CD8-positive, alpha-beta memory T cell (primary cell): ENCODE measurements at regions of chr17 and their contacts with region 1.

Region 1: GRCh38 chr17:59791603-59792457 is 84.4 kb downstream of the VMP1 start:
- DNase-seq: no peak
- H3K4me3 ChIP-seq: no peak overlapping the region
- H3K4me3 Mint-ChIP-seq: no peak overlapping the region
- H3K27ac ChIP-seq: no peak overlapping the region
- H3K27ac Mint-ChIP-seq: peak overlapping the region in 3 of 8 donors; percentile 23 to 45 (median 33)
- H3K4me1 ChIP-seq: peaks cover 15% of the 10 kb centered on the region
- H3K4me1 Mint-ChIP-seq: peaks cover 8 to 23% (median 18%) of the 10 kb centered on the region in 3 donors
- H3K27me3 ChIP-seq: no peaks in the 10 kb centered on the region
- H3K27me3 Mint-ChIP-seq: no peaks in the 10 kb centered on the region

Region 2: GRCh38 chr17:59846394-59847165 is 54.8 kb after region 1 on chr17:
- CTCF ChIA-PET with region 1: interaction called, 3 read pairs
- POLR2A ChIA-PET with region 1: interaction called, 11 read pairs
- DNase-seq: no peak
- H3K4me3 ChIP-seq: no peak overlapping the region
- H3K4me3 Mint-ChIP-seq: peak overlapping the region in 3 of 7 donors; percentile 16 to 73 (median 46)
- H3K27ac ChIP-seq: no peak overlapping the region
- H3K27ac Mint-ChIP-seq: peak overlapping the region in 6 of 8 donors; percentile 10 to 85 (median 57)
- H3K4me1 ChIP-seq: peaks cover 50% of the 10 kb centered on the region
- H3K4me1 Mint-ChIP-seq: peaks cover 44 to 69% (median 64%) of the 10 kb centered on the region in 3 donors
- H3K27me3 ChIP-seq: no peaks in the 10 kb centered on the region
- H3K27me3 Mint-ChIP-seq: peaks cover 0 to 1% of the 10 kb centered on the region in 2 donors